ENCODE measurements at regions of chr10 and their contacts with region 1.

Region 1: GRCh38 chr10:54363390-54363789 is 437.6 kb downstream of the PCDH15 start:
- DNase-seq: no peak
- H3K4me3 ChIP-seq: no peak overlapping the region
- H3K27ac ChIP-seq: no peak overlapping the region
- H3K4me1 ChIP-seq: no peaks in the 10 kb centered on the region
- H3K27me3 ChIP-seq: no peaks in the 10 kb centered on the region
- CTCF ChIP-seq: no peak
- POLR2A ChIP-seq: no peak

Region 2: DNA sequence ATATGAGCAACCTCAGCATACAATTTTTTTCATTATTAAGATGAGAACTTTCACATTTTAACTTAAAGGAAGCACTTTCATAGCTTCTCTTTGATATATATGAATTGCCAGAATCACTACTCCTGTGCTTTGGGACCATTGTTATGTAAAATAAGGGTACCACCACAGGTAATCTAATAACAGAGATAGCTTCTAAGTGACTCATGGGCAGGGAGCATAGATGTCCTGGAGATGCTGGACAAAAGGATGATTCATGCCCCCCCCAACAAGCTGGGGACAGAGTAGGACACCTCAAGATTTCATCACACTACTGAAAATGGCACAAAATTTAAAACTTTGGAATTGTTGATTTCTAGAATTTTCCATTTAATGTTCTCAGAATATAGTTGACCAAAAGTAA is 203.5 kb before region 1 on chr10:
- intact Hi-C with region 1: no loop called
- DNase-seq: no peak
- H3K4me3 ChIP-seq: no peak overlapping the region
- H3K27ac ChIP-seq: no peak overlapping the region
- H3K4me1 ChIP-seq: no peaks in the 10 kb centered on the region
- H3K27me3 ChIP-seq: no peaks in the 10 kb centered on the region
- CTCF ChIP-seq: no peak
- POLR2A ChIP-seq: no peak

Region 3: GRCh38 chr10:54396004-54396403 is 32.6 kb after region 1 on chr10:
- intact Hi-C with region 1: no loop called
- DNase-seq: no peak
- H3K4me3 ChIP-seq: no peak overlapping the region
- H3K27ac ChIP-seq: no peak overlapping the region
- H3K4me1 ChIP-seq: no peaks in the 10 kb centered on the region
- H3K27me3 ChIP-seq: no peaks in the 10 kb centered on the region
- CTCF ChIP-seq: no peak
- POLR2A ChIP-seq: no peak

Region 4: DNA sequence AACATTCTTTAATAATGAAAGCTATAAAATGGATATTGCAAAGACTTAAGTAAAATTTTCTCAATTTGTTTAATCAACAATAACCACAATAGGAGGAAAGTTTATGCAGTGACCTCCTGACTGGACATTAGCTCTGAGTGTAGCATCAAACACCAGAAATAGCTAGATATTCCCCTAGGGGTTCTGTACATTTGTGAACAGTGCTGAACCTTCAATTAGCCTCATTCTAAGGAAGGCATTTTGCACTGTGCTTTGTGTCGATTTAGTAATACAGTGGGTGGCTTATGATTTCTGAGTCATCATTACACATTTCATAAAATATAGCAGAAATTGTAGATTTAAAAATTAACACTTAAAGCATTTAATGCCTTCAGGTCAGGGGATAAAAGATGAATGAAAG is 805.0 kb after region 1 on chr10:
- intact Hi-C with region 1: loop called (anchors 5 kb)
- DNase-seq: no peak
- H3K4me3 ChIP-seq: no peak overlapping the region
- H3K27ac ChIP-seq: no peak overlapping the region
- H3K4me1 ChIP-seq: no peaks in the 10 kb centered on the region
- H3K27me3 ChIP-seq: no peaks in the 10 kb centered on the region
- CTCF ChIP-seq: no peak
- POLR2A ChIP-seq: no peak

Measured in vagina (tissue), 2 donors.